ENCODE measurements at regions of chr1 and their contacts with region 1.

Region 1: GRCh38 chr1:109397538-109398342 is at the start of gene SORT1:
- DNase-seq: peak; percentile 78
- H3K4me3 ChIP-seq: peak within 1 kb of the TSS; percentile 65
- H3K27ac ChIP-seq: no peak within 1 kb of the TSS
- H3K27me3 ChIP-seq: no peaks in the 10 kb centered on the region
- CTCF ChIP-seq: no peak
- polyA plus RNA-seq, gene SORT1: 37.2 and 42.8 TPM in 2 replicates

Region 2: DNA sequence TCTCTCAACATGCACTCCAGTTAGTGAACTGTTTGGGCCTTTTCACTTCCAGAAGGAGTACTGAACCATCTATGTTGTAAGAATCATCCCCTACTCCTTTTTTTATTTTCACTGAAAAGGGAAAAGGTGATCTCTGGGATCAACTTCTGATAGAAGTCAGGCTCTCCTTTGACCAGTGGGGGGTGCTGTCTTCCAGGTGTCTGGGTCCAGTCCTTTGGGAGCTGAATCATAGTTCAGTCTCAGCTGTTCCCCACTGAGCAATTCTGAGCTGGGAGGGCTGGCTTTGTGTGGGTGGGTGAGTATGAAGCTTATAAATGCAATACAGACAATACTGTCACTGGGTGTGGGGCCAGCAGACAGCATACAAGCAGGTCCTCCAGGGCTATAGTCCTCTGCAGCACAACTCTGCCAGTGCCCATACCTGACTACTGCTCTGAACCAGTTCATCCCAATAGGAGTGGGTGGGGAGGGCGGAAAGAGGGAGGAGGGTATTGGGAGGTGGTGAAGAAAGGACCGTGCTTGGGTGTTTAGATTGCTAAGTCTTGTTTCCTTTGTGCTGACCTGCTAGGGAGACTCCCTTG is 196.5 kb before region 1 on chr1:
- CTCF ChIA-PET with region 1: interaction called, 11 read pairs
- POLR2A ChIA-PET with region 1: no interaction called
- DNase-seq: peak; percentile 81
- H3K4me3 ChIP-seq: no peak overlapping the region
- H3K27ac ChIP-seq: peak overlapping the region; percentile 11
- H3K27me3 ChIP-seq: no peaks in the 10 kb centered on the region
- CTCF ChIP-seq: peak; percentile 82

Region 3: DNA sequence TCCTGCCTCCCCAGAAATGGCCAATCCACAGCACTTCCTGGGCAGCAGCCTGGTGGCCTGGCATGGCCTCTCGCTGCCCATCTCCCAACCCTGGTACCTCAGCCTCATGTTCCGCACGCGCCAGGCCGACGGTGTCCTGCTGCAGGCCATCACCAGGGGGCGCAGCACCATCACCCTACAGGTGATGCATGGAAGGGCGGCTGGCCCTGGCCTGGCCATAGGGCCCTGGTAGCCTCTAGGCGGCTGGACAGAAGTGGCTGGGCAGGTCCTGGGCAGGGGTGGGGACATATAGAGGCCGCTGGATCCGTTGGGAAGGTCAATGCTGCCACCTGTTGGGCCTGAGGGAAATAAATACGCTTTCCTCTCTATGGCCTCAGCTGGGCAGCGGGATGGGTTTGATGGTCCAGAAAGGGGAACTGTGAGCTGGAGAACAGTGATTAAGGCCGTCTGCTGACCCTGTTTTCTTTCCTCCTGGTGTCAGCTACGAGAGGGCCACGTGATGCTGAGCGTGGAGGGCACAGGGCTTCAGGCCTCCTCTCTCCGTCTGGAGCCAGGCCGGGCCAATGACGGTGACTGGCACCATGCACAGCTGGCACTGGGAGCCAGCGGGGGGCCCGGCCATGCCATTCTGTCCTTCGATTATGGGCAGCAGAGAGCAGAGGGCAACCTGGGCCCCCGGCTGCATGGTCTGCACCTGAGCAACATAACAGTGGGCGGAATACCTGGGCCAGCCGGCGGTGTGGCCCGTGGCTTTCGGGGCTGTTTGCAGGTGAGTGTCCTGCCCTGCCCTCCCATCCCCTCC is 133.9 kb before region 1 on chr1:
- CTCF ChIA-PET with region 1: interaction called, 60 read pairs
- POLR2A ChIA-PET with region 1: no interaction called
- DNase-seq: no peak
- H3K4me3 ChIP-seq: no peak overlapping the region
- H3K27ac ChIP-seq: no peak overlapping the region
- H3K27me3 ChIP-seq: no peaks in the 10 kb centered on the region
- CTCF ChIP-seq: peak; percentile 98

Region 4: GRCh38 chr1:109282952-109283747 is 114.6 kb before region 1 on chr1 and contains the start of gene PSRC1:
- CTCF ChIA-PET with region 1: interaction called, 119 read pairs
- POLR2A ChIA-PET with region 1: interaction called, 9 read pairs
- DNase-seq: peak; percentile 92
- H3K4me3 ChIP-seq: peak within 1 kb of the TSS; percentile 93
- H3K27ac ChIP-seq: peak within 1 kb of the TSS; percentile 83
- H3K27me3 ChIP-seq: no peaks in the 10 kb centered on the region
- CTCF ChIP-seq: peak; percentile 68
- polyA plus RNA-seq, gene PSRC1: 17.3 and 18.5 TPM in 2 replicates

Region 5: DNA sequence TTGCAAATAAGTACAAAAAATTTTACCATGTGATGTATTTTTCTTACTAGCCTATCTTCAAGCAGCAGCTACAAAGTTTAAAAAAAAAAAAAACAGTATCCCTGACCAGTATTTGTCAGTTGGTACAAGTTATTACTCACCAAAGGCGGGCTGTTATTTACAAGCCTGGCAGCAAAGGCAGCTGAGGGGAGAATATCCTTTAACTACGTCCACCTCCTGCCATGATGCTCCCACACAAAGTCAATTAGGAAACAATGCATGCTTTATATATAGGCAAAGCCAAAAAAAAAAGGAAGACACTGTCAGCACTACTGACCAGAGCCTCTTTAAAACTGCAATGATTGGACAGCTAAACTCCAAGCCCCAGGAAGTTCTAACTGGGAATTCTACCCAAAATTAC is 14.8 kb after region 1 on chr1:
- CTCF ChIA-PET with region 1: interaction called, 12 read pairs
- POLR2A ChIA-PET with region 1: no interaction called
- DNase-seq: no peak
- H3K4me3 ChIP-seq: no peak overlapping the region
- H3K27ac ChIP-seq: no peak overlapping the region
- H3K27me3 ChIP-seq: no peaks in the 10 kb centered on the region
- CTCF ChIP-seq: no peak

Measured in AG04450 (cell line).